ENCODE measurements at regions of chr20 and their contacts with region 1.

Region 1: DNA sequence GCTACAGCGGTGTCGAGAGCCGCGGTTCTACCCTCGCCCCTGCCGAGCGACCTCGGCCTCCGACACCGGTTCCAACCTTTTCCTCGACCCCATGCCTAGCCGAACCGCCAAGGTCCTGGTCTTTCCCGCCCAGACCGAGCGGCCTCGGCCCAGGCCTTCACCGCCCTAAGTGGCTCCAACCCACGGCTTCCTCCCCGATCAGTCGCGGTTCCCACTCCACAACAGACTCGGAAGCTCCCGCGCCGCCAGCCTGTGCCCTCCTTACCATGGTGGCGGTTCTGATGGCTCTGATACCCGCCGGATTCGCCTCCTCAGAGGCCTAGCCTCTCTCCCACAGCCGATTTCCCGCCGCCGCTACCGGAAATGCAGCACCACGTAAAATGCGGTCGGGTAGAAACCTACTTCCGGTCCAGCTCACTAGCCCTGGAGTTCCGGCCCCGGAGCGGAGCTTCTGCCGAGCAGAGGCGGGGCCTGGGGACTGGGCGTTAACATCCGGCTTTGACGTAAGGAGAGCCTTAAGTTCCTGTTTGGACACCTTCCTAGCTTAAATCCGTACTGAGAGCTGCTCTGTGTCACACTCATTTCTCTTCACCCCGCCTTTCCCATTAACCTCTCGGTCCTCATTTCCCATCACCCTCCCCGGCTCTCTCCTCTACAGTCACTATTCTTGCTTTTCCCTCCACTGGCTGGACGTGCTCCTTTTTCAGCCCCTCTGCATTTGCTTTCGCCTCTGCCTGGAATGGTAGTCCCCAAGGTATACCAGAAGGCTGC is at the start of gene SNRPB:
- DNase-seq: peak; percentile 96

Region 2: GRCh38 chr20:2485661-2486060 is 15.1 kb after region 1 on chr20:
- CTCF ChIA-PET with region 1: no interaction called
- POLR2A ChIA-PET with region 1: interaction called, 10 read pairs
- DNase-seq: no peak

Region 3: DNA sequence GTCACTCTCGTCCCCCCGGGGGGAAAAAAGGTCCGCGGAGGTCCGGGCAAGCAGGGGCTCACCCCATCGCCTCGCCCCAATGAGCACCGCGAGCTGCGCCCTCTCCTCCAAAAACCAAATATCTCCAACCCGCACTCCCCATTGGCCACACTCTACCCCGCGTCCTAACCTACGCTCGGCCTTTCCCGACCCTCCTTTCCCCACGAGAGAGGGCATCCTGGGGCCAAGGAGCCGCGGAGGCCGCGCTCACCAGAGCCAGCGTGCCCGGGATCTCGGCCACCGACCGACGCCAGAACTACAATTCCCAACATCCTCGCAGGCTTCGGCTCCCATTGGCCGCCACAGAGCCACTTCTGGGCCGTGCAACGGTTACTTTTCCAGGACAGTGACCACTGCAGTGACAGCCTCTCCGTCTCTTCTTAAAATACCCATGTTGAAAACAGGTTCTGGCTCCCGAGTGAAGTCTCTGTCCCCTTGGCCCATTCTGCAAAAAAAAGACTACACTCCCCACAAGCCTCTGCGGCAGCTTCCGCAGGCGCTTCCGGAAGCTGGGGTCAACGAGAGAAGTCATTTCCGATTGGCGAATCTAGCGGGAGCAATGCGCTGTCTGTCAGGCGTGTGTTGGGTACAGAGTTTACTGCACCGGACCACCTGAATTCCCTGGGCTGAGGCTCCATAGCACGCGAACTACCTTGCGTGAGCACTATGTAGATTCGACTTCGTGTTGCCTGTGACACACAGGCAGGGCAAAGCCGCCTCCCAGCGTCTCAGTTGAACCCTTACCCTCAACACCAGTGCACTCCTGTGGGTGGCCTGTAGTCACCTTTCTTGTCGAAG is 38.2 kb after region 1 on chr20 and contains the start of gene ZNF343:
- CTCF ChIA-PET with region 1: no interaction called
- POLR2A ChIA-PET with region 1: interaction called, 21 read pairs
- DNase-seq: peak; percentile 88

Region 4: GRCh38 chr20:2523919-2524708 is 53.5 kb after region 1 on chr20:
- CTCF ChIA-PET with region 1: interaction called, 6 read pairs
- POLR2A ChIA-PET with region 1: interaction called, 16 read pairs
- DNase-seq: peak; percentile 83

Measured in HEK293T (cell line).